ENCODE measurements at regions of chr15 and their contacts with region 1.

Region 1: DNA sequence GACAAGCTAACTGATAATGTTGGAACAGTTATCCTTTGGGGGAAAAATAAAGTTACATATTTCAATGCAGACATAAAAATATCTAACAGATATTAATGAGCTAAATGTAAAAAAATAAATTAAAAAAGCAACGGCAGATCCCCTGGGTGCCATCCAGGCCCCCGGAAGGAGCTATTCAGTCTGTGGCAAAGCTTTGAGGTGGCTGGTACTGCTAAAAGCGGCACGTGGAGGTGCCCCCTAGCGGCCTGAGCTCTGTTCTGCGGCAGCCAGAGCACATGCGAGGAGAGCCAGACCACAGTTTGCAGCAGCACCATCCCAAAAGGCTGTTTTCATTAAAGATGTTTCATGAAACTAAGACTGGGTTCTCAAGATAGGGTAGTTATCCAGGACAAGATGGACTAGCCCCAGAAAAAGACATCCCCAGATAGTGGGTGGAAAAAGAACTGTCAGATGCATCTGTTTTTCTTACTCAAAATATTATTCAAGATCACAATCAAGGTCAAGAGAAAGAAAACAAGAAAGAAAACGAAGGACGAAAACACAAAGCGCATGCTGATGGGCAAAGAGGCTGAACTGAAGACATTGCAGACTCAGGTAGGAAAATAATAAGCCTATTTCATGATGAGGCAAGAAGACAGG is 18.7 kb downstream of the AP3S2 start:
- H3K4me3 ChIP-seq: no peak overlapping the region
- H3K27ac ChIP-seq: no peak overlapping the region
- H3K4me1 ChIP-seq: no peaks in the 10 kb centered on the region
- CTCF ChIP-seq: peak; percentile 71

Region 2: GRCh38 chr15:89406940-89407607 is 468.0 kb before region 1 on chr15:
- CTCF ChIA-PET with region 1: no interaction called
- POLR2A ChIA-PET with region 1: no interaction called
- H3K4me3 ChIP-seq: no peak overlapping the region
- H3K27ac ChIP-seq: no peak overlapping the region
- H3K4me1 ChIP-seq: peaks cover 2% of the 10 kb centered on the region; the same call in 1 of the 2 replicates
- CTCF ChIP-seq: no peak

Region 3: DNA sequence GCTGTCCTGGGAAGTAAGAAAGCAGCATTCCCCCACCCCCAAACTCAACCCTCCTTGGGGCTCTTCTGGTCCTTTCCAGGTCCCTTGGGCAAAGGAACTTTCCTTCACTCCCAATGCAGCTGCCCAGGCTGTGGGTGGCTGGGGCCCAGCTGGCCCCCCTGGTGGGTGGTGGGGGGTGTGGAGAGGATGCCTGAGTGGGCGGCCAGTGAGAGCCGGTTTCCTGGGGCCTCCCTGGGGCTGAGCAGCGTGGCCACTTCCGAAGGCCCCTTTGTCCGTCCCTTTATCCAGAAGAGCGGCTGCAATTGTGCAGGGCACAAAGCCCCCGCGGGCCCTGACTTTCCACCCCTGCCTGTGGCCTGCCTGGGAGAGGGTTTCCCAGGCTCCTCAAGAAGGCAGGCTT is 439.7 kb before region 1 on chr15:
- CTCF ChIA-PET with region 1: no interaction called
- POLR2A ChIA-PET with region 1: no interaction called
- H3K4me3 ChIP-seq: no peak overlapping the region
- H3K27ac ChIP-seq: no peak overlapping the region
- H3K4me1 ChIP-seq: no peaks in the 10 kb centered on the region
- CTCF ChIP-seq: no peak

Region 4: DNA sequence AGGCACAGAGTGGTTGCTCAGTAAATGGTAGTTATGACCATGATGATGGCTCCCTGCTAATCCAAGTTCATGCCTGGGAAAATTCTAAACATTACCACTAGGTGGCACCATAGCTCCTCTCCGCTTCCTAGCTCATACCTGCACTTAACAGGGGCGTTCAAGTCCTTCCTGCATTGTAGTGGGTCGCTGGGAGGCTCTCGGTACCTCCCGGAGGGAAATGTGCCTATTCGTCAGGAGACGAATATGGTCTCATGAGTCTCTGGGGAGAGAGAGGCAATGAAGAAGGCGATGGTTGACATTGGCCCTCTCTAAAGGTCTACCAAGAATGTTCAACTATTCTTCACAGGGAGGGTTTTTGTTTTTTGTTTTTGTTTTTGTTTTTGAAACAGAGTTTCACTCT is 134.9 kb before region 1 on chr15:
- CTCF ChIA-PET with region 1: interaction called, 73 read pairs
- POLR2A ChIA-PET with region 1: interaction called, 3 read pairs
- H3K4me3 ChIP-seq: no peak overlapping the region
- H3K27ac ChIP-seq: no peak overlapping the region
- H3K4me1 ChIP-seq: no peaks in the 10 kb centered on the region
- CTCF ChIP-seq: peak; percentile 86

Region 5: DNA sequence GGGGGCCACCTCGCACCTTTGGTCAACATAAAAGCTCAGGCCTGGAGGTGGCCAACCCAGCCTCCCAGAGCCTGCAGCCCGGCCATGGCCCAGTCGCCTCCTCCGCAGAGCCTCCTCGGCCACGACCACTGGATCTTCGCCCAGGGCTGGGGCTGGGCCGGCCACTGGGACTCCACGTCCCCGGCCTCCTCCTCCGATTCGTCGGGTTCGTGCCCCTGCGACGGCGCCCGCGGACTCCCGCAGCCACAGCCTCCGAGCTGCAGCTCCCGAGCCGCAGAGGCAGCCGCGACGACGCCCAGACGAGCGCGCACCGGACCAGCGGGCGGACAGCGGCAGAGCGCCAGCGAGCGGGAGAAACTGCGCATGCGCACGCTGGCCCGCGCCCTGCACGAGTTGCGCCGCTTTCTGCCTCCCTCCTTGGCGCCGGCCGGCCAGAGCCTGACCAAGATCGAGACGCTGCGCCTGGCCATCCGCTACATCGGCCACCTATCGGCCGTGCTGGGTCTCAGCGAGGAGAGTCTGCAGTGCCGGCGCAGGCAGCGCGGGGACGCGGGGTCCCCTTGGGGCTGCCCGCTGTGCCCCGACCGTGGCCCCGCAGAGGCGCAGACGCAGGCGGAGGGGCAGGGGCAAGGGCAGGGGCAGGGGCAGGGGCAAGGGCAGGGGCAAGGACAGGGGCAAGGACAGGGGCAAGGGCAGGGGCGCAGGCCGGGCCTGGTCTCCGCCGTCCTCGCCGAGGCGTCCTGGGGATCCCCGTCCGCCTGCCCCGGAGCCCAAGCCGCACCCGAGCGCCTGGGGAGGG is 98.6 kb before region 1 on chr15 and contains the start of gene MESP2:
- CTCF ChIA-PET with region 1: interaction called, 31 read pairs
- POLR2A ChIA-PET with region 1: interaction called, 3 read pairs
- H3K4me3 ChIP-seq: peak within 1 kb of the TSS; percentile 27
- H3K27ac ChIP-seq: peak within 1 kb of the TSS; percentile 10; the same call in 1 of the 2 replicates
- H3K4me1 ChIP-seq: no peaks in the 10 kb centered on the region; the same call in 1 of the 2 replicates
- CTCF ChIP-seq: peak; percentile 26; the same call in 1 of the 2 replicates

Region 6: GRCh38 chr15:89837134-89837833 is 37.8 kb before region 1 on chr15:
- CTCF ChIA-PET with region 1: interaction called, 10 read pairs
- POLR2A ChIA-PET with region 1: no interaction called
- H3K4me3 ChIP-seq: no peak overlapping the region
- H3K27ac ChIP-seq: no peak overlapping the region
- H3K4me1 ChIP-seq: no peaks in the 10 kb centered on the region
- CTCF ChIP-seq: no peak

Region 7: DNA sequence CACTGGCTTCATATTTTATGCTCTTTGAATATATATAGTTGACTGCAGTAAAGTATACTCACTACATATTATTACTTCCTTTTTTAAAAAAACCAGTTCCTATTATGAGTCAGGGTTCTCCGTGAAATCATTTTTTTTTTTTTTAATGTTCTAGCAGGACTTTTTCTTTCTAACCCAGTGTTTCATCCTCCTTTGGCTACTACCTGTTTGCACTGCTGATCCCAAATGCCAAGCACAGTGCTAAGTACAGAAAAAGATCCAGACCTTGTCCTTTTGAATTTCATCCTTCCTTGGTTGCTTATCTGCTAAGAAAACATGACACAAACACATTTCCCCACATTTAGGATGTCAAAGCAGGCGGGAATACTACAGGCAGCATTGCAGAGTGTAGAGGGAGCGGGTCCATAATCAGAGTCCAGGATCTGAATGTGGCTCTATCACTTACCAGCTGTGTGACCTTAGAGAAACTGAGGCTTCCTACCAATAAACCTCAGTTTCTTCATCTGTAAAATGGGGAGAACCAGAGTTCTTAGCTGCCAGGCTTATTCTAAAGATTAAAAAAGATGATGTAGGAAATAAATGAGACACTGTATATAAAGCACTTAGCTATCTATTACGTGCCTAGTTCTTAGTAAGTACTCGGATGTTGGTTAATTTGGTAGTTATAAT is 23.2 kb before region 1 on chr15:
- CTCF ChIA-PET with region 1: interaction called, 29 read pairs
- POLR2A ChIA-PET with region 1: no interaction called
- H3K4me3 ChIP-seq: no peak overlapping the region
- H3K27ac ChIP-seq: no peak overlapping the region
- H3K4me1 ChIP-seq: no peaks in the 10 kb centered on the region
- CTCF ChIP-seq: no peak

Region 8: GRCh38 chr15:89893696-89894455 is 18.8 kb after region 1 on chr15 and contains the start of gene AP3S2:
- CTCF ChIA-PET with region 1: interaction called, 145 read pairs
- POLR2A ChIA-PET with region 1: interaction called, 9 read pairs
- H3K4me3 ChIP-seq: peak within 1 kb of the TSS; percentile 64
- H3K27ac ChIP-seq: peak within 1 kb of the TSS; percentile 84
- H3K4me1 ChIP-seq: peaks cover 3% of the 10 kb centered on the region
- CTCF ChIP-seq: no peak

Region 9: DNA sequence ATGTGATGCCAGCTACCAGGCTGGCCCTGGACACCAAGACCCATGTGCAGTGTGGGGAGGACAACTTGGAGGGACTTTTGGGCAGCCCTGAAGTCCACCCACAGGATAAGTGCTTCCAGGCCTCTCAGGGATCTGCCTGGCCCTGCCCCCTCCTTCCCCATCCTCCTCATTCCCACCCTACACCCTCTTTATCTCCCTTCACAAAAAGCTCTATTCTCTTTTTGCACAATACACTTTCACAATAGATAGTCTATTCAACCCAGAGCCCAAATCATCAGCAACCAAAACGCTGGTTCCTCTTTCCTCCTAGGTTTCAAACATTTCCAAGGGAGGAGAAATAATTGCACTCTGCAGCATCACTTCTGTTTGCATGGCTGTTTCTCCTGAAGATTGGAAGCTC is 118.3 kb after region 1 on chr15:
- CTCF ChIA-PET with region 1: no interaction called
- POLR2A ChIA-PET with region 1: no interaction called
- H3K4me3 ChIP-seq: no peak overlapping the region
- H3K27ac ChIP-seq: no peak overlapping the region
- H3K4me1 ChIP-seq: peaks cover 3% of the 10 kb centered on the region; the same call in 1 of the 2 replicates
- CTCF ChIP-seq: no peak

Region 10: DNA sequence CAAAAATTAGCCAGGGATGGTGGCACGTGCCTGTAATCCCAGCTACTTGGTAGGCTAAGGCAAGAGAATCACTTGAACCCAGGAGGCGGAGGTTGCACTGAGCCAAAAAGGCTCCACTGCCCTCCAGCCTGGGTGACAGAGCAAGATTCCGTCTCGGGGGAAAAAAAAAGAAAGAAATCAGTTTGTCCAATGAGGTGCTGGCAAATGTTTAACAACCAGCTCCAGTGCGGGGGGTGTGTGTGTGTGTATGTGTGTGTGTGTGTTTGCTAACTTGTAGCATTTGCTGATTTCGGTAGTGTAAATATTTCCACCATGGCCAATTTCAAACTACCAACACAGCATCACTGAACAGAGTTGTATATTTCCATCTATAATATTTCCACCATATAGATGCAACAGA is 251.0 kb after region 1 on chr15:
- CTCF ChIA-PET with region 1: no interaction called
- POLR2A ChIA-PET with region 1: no interaction called
- H3K4me3 ChIP-seq: no peak overlapping the region
- H3K27ac ChIP-seq: no peak overlapping the region
- H3K4me1 ChIP-seq: 0 out of 2 replicates have a peak, but pooled peaks cover 3% of the 10 kb centered on the region
- CTCF ChIP-seq: no peak